HCT116 (cell line): ENCODE measurements at regions of chr3 and their contacts with region 1.

Region 1: GRCh38 chr3:63818281-63819150 is 583 bp upstream of the C3orf49 start:
- DNase-seq: peak; percentile 28
- ATAC-seq: peak; percentile 75
- H3K4me3 ChIP-seq: no peak overlapping the region
- H3K27ac ChIP-seq: no peak overlapping the region
- H3K4me1 ChIP-seq: no peaks in the 10 kb centered on the region
- H3K27me3 ChIP-seq: no peaks in the 10 kb centered on the region
- CTCF ChIP-seq: peak; percentile 54 to 93 (median 64); a peak in 5 of 6 replicates
- POLR2A ChIP-seq: no peak
- RAD21 ChIP-seq: peak; percentile 77

Region 2: GRCh38 chr3:63064209-63064942 is 754.1 kb before region 1 on chr3:
- CTCF ChIA-PET with region 1: no interaction called
- POLR2A ChIA-PET with region 1: no interaction called
- RAD21 ChIA-PET with region 1: no interaction called
- intact Hi-C with region 1: no loop called
- DNase-seq: no peak
- ATAC-seq: no peak
- H3K4me3 ChIP-seq: no peak overlapping the region
- H3K27ac ChIP-seq: no peak overlapping the region
- H3K4me1 ChIP-seq: no peaks in the 10 kb centered on the region
- H3K27me3 ChIP-seq: no peaks in the 10 kb centered on the region
- CTCF ChIP-seq: no peak
- POLR2A ChIP-seq: no peak
- RAD21 ChIP-seq: no peak

Region 3: DNA sequence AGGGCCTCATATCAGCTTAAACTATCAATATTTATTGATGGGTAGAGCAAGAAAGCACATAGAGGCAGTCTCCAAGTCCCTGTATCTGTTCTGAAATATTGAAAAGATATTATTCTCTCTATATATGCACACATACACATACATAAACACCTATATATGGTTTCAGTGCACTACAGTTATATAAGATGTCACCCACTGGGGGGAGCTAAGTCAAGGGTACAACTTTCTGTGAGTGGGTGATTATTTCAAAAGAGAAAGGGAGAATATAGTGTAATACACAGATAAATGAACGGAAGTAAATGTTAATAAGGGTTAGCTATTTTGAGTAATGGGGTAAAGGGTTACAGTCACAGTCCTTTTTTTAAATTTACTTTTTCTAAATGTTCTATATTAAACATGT is 157.3 kb before region 1 on chr3:
- CTCF ChIA-PET with region 1: no interaction called
- POLR2A ChIA-PET with region 1: no interaction called
- RAD21 ChIA-PET with region 1: no interaction called
- intact Hi-C with region 1: loop called (anchors 5 kb)
- DNase-seq: no peak
- ATAC-seq: 0 out of 2 replicates have a peak, but pooled peaks have one; percentile 32
- H3K4me3 ChIP-seq: no peak overlapping the region
- H3K27ac ChIP-seq: no peak overlapping the region
- H3K4me1 ChIP-seq: no peaks in the 10 kb centered on the region
- H3K27me3 ChIP-seq: peaks cover 8% of the 10 kb centered on the region; the same call in 1 of the 2 replicates
- CTCF ChIP-seq: peak in 1 of 3 experiments; percentile 38; a peak in 2 of 6 replicates
- POLR2A ChIP-seq: no peak
- RAD21 ChIP-seq: 0 out of 2 replicates have a peak, but pooled peaks have one; percentile 9

Region 4: GRCh38 chr3:63886858-63887257 is 68.3 kb after region 1 on chr3:
- CTCF ChIA-PET with region 1: no interaction called
- POLR2A ChIA-PET with region 1: no interaction called
- RAD21 ChIA-PET with region 1: no interaction called
- intact Hi-C with region 1: no loop called
- DNase-seq: no peak
- ATAC-seq: no peak
- H3K4me3 ChIP-seq: no peak overlapping the region
- H3K27ac ChIP-seq: no peak overlapping the region
- H3K4me1 ChIP-seq: no peaks in the 10 kb centered on the region
- H3K27me3 ChIP-seq: no peaks in the 10 kb centered on the region
- CTCF ChIP-seq: no peak
- POLR2A ChIP-seq: no peak
- RAD21 ChIP-seq: no peak

Region 5: DNA sequence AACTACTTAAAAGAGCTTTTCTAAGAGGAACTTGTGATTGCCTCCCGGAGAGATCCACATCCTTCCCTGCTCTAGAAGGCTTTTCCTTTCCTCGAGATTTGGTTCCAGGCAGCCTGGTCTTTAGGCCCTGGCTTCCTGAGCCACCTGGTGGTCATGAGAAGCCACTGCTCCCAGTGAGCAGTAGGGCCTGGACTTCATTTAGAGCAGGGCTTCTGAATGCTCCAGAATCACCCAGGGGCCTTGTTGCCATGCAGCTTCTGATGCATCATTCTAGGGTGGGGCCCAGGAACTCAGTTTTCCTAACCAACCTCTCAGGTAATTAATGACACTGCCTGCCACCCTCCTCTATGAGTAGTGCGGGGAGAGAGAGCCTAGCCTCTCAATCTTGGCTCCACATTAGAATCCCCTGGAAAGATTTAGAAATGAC is 175.2 kb after region 1 on chr3:
- CTCF ChIA-PET with region 1: no interaction called
- POLR2A ChIA-PET with region 1: no interaction called
- RAD21 ChIA-PET with region 1: no interaction called
- intact Hi-C with region 1: loop called (anchors 10 kb)
- DNase-seq: peak; percentile 27
- ATAC-seq: peak; percentile 98
- H3K4me3 ChIP-seq: no peak overlapping the region
- H3K27ac ChIP-seq: no peak overlapping the region
- H3K4me1 ChIP-seq: no peaks in the 10 kb centered on the region
- H3K27me3 ChIP-seq: no peaks in the 10 kb centered on the region
- CTCF ChIP-seq: peak; percentile 56 to 93 (median 84)
- POLR2A ChIP-seq: no peak
- RAD21 ChIP-seq: peak; percentile 71